ENCODE measurements at regions of chr20 and their contacts with region 1.

Region 1: DNA sequence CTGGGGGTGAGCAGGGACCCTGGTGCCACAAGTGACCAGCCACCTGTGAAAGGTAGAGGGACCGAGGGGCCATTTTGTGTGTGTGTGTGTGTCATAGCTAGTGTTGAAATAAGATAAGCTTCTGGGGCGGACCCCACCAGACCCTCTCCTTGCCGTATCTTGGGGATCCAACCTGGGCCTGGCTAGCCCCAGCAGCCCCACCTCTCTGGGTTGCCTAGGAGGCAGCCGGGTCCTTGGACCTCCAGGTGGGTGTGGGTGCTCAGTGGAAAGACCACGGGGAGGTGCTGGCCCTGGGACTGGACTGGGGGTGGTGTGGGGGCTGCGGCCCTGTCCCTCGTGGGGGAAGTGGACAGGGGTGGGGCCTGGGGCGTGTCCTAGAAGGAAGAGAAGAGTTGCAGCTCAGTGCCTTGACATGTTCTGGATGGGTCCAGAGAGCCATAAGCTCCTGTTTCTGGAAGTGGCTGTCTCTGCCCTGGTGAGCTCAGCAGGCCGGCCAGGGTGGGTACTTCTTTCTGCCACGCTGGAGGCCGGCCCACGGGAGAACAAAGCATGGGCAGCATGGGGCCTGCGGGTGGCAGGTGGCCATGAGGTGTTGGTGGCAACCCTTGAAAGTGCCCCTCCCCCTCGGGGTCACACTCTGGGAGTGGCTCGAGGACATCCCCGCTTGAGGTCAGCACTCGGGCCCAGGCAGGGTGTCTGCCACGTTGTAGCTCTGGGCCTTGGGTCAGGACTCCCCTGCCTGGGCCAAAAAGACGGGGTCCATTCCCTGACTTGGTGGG is 8.4 kb downstream of the RBBP8NL start:
- DNase-seq: peak; percentile 53 to 78 (median 73)
- ATAC-seq: peak; percentile 56
- H3K4me3 ChIP-seq: no peak overlapping the region
- H3K27ac ChIP-seq: no peak overlapping the region
- H3K4me1 ChIP-seq: peaks cover 8 to 90% of the 10 kb centered on the region in 2 experiments; a peak in 4 of 5 replicates
- H3K27me3 ChIP-seq: peaks cover 10 to 45% of the 10 kb centered on the region in 2 experiments; a peak in 4 of 5 replicates
- CTCF ChIP-seq: no peak
- EP300 ChIP-seq: no peak
- POLR2A ChIP-seq: no peak
- RAD21 ChIP-seq: no peak

Region 2: DNA sequence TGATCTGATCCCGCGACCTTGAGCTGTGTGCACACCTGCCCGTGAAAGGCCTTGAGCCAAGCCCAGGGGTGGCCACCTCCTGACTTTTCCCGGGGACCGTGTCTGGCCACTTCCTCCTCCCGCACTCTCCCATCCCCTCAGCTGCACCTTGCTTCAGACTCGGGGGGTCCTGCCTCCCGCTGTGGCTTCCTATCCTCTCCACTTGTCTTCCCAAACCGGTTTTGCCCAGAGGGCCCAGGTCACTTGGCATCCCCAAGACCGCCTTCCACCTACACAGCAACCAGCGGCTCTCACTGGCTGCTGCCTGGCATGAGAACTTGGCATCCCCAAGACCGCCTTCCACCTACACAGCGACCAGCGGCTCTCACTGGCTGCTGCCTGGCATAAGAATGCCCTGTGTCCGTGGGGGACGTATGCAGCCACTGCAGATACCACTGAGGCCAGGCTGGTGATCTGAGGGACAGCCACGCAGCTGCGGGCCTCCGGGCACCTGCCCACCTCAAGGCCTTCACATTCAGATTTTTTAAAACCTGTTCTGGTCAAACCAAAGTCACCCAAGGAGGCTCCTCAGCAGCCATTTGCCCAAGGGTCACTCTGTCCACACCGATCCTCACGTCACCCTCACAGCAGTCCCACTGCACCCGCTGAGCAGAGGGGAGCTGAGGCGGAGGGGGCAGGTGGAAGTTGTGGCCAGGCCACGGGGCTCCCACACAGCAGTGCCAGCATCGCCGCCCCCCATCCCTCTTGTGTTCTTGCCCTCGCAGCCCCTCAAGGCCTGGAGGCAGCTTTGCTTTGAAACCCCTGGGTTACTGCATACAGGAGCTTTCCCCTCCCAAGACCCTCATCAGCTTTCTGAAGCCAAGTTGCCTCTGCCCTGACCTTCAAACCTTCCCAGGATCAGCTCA is 598.7 kb before region 1 on chr20:
- CTCF ChIA-PET with region 1: no interaction called
- POLR2A ChIA-PET with region 1: no interaction called
- in situ Hi-C with region 1: no loop called
- intact Hi-C with region 1: no loop called
- DNase-seq: no peak
- ATAC-seq: no peak
- H3K4me3 ChIP-seq: no peak overlapping the region
- H3K27ac ChIP-seq: no peak overlapping the region
- H3K4me1 ChIP-seq: no peaks in the 10 kb centered on the region
- H3K27me3 ChIP-seq: peaks cover 11 to 52% of the 10 kb centered on the region in 2 experiments; a peak in 4 of 5 replicates
- CTCF ChIP-seq: no peak
- EP300 ChIP-seq: no peak
- POLR2A ChIP-seq: no peak
- RAD21 ChIP-seq: no peak

Region 3: DNA sequence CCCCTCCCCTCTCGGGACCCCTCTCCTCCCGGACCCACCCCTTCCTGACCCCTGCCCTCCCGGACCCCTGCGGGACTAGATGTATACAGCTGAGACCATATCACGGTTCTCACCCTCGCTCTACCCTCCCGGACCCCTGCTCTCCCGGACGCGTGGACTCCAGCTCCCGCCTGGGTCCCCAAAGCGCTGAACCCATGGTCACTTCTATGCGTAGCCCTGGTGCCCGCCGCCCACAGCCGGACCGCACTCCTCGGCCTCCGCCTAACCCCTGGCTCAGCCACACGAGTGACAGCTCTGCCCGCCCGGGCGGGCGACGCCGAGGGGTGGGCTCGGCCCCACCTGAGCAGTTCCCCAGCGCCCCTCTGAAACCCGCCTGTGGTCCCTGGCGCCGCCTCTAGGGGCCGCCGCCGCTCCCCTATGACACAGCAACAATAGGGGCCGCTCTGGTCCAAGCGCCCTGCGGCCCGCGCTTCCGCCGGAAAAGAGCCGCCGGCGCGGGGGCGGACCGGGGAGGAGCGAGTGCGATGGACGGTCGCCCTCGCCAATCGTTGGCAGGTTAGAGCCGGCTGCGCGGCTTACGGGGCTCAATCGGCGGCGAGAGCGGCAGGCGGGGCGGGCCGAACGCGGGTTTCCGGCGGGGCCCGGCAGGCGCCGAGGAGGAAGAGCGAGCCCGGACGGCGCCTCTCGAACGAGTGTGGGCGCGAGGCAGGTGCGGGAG is 116.4 kb before region 1 on chr20 and contains the start of gene ADRM1:
- CTCF ChIA-PET with region 1: no interaction called
- POLR2A ChIA-PET with region 1: no interaction called
- in situ Hi-C with region 1: no loop called
- intact Hi-C with region 1: no loop called
- DNase-seq: peak; percentile 95 to 99 (median 96)
- ATAC-seq: peak; percentile 93
- H3K4me3 ChIP-seq: peak within 1 kb of the TSS; percentile 71
- H3K27ac ChIP-seq: peak within 1 kb of the TSS; percentile 93
- H3K4me1 ChIP-seq: peaks cover 14 to 71% of the 10 kb centered on the region in 2 experiments
- H3K27me3 ChIP-seq: no peaks in the 10 kb centered on the region
- CTCF ChIP-seq: peak; percentile 94 to 99 (median 96)
- EP300 ChIP-seq: 0 out of 2 replicates have a peak, but pooled peaks have one; percentile 34
- POLR2A ChIP-seq: peak; percentile 80
- RAD21 ChIP-seq: peak; percentile 19 to 40; a peak in 2 of 4 replicates
- polyA plus RNA-seq, gene ADRM1: 5.0 to 21.6 TPM

Region 4: GRCh38 chr20:62494980-62495748 is 76.3 kb after region 1 on chr20:
- CTCF ChIA-PET with region 1: no interaction called
- POLR2A ChIA-PET with region 1: no interaction called
- in situ Hi-C with region 1: loop called (anchors 5 kb)
- intact Hi-C with region 1: no loop called
- DNase-seq: no peak
- ATAC-seq: no peak
- H3K4me3 ChIP-seq: no peak overlapping the region
- H3K27ac ChIP-seq: no peak overlapping the region
- H3K4me1 ChIP-seq: peaks cover 10 to 70% of the 10 kb centered on the region in 2 experiments
- H3K27me3 ChIP-seq: no peaks in the 10 kb centered on the region
- CTCF ChIP-seq: 0 out of 6 replicates have a peak, but pooled peaks of 1 of the 3 experiments have one; percentile 10
- EP300 ChIP-seq: no peak
- POLR2A ChIP-seq: no peak
- RAD21 ChIP-seq: no peak